AG04450 (cell line): ENCODE measurements at regions of chr17 and their contacts with region 1.

Region 1: GRCh38 chr17:47279062-47279736 is 25.6 kb downstream of the ITGB3 start:
- DNase-seq: peak; percentile 90
- H3K4me3 ChIP-seq: no peak overlapping the region
- H3K27ac ChIP-seq: peak overlapping the region; percentile 95
- H3K27me3 ChIP-seq: no peaks in the 10 kb centered on the region
- CTCF ChIP-seq: peak; percentile 37

Region 2: DNA sequence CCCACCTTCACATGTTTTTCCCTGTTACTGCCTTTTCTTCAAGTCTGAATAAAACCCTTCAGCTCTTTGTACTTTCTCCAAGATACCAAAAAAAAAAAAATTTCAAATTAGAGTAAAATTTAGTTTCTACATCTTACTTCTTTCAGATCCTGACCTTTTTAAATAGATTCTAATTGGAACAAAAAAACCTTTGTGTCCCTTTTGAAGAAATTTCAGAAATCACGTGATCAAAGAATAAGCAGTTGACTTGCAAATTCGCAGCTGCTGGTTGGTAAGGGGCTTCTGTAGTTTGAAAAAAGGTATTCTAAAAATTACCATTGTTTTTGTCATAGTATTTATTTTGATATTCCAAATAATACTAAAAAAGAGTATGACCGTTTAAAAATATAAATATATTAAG is 161.8 kb before region 1 on chr17:
- CTCF ChIA-PET with region 1: no interaction called
- POLR2A ChIA-PET with region 1: interaction called, 12 read pairs
- DNase-seq: no peak
- H3K4me3 ChIP-seq: no peak overlapping the region
- H3K27ac ChIP-seq: no peak overlapping the region
- H3K27me3 ChIP-seq: no peaks in the 10 kb centered on the region
- CTCF ChIP-seq: no peak

Region 3: GRCh38 chr17:47305302-47305923 is 26.2 kb after region 1 on chr17:
- CTCF ChIA-PET with region 1: no interaction called
- POLR2A ChIA-PET with region 1: interaction called, 12 read pairs
- DNase-seq: peak; percentile 74
- H3K4me3 ChIP-seq: no peak overlapping the region
- H3K27ac ChIP-seq: peak overlapping the region; percentile 31
- H3K27me3 ChIP-seq: no peaks in the 10 kb centered on the region
- CTCF ChIP-seq: no peak